Right cardiac atrium (tissue), 5 donors: ENCODE measurements at regions of chr3 and their contacts with region 1.

Region 1: DNA sequence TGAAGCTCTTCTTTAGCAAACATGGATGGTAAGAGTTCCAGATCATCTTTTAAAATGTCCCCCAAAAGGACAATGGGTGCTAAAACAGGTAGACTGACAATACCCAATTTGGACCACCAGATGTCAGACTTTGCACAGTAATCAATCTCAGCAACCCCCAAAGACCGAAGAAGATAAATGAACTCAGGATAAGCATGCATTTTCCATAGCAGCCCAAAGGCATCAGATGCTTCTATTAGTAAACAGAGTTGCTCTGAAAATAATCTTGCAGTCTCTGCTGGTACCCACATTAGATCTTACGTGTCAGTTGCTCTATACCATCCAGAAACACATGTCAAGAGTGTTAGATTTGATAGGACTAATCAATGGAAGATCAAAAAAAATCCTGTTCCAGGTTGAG is 20.6 kb downstream of the MYH15 start:
- DNase-seq: no peak
- ATAC-seq: peak; percentile 47 to 66
- H3K4me3 ChIP-seq: no peak overlapping the region
- H3K27ac ChIP-seq: no peak overlapping the region
- H3K4me1 ChIP-seq: no peaks in the 10 kb centered on the region
- H3K27me3 ChIP-seq: no peaks in the 10 kb centered on the region

Region 2: GRCh38 chr3:108420926-108421325 is 68.8 kb before region 1 on chr3:
- intact Hi-C with region 1: no loop called
- DNase-seq: no peak
- ATAC-seq: no peak
- H3K4me3 ChIP-seq: no peak overlapping the region
- H3K27ac ChIP-seq: no peak overlapping the region
- H3K4me1 ChIP-seq: no peaks in the 10 kb centered on the region
- H3K27me3 ChIP-seq: no peaks in the 10 kb centered on the region

Region 3: DNA sequence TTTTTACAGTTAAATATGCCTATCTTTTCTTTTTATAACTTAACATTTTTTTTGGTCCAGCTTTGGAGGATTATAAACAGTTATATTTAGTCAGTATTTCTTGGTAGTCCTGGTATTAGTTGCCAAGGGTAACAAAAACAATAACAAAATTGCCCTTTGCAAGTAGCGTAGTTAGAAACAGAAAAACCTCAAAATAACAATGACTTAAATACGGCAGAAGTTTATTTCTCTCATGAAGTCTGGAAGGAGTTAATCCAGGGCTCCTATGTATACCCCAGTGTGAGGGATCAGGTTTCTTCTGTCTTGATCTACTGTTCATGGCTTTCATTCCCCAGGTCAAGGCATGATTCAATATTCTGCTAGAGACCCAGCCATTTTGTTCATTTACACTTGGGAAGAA is 34.8 kb after region 1 on chr3:
- intact Hi-C with region 1: no loop called
- DNase-seq: no peak
- ATAC-seq: peak in 1 of 2 donors; percentile 43
- H3K4me3 ChIP-seq: no peak overlapping the region
- H3K27ac ChIP-seq: no peak overlapping the region
- H3K4me1 ChIP-seq: peaks cover 2% of the 10 kb centered on the region
- H3K27me3 ChIP-seq: no peaks in the 10 kb centered on the region

Region 4: GRCh38 chr3:108552267-108553159 is 62.7 kb after region 1 on chr3:
- intact Hi-C with region 1: loop called (anchors 2 to 5 kb)
- DNase-seq: no peak
- ATAC-seq: peak; percentile 39 to 64
- H3K4me3 ChIP-seq: no peak overlapping the region
- H3K27ac ChIP-seq: no peak overlapping the region
- H3K4me1 ChIP-seq: no peaks in the 10 kb centered on the region
- H3K27me3 ChIP-seq: no peaks in the 10 kb centered on the region

Region 5: DNA sequence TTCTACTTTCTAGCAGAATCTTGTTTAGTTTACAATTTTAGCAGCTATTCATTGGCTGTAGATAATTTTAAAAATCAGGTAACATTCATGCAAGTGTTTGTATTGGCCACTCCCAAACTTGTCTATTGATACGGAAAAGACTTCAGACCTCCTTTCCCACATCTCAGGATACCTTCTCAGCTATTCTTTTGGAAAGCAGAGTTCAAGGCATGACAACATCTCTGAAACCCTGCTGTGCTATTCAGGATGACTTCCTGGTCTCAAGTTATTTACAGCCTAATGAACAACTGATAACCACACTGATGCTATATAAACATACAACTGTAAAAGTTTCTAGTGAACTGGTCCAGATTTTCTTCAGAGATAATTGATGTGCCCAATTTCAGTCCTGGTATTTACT is 155.6 kb after region 1 on chr3:
- intact Hi-C with region 1: no loop called
- DNase-seq: no peak
- ATAC-seq: no peak
- H3K4me3 ChIP-seq: no peak overlapping the region
- H3K27ac ChIP-seq: no peak overlapping the region
- H3K4me1 ChIP-seq: no peaks in the 10 kb centered on the region
- H3K27me3 ChIP-seq: no peaks in the 10 kb centered on the region